OCI-LY7 (cell line): ENCODE measurements at regions of chr19 and their contacts with region 1.

Region 1: GRCh38 chr19:47225746-47226425 is 5.1 kb downstream of the BBC3 start:
- DNase-seq: peak; percentile 92
- H3K4me3 ChIP-seq: peak overlapping the region; percentile 90
- H3K27ac ChIP-seq: peak overlapping the region; percentile 97
- H3K4me1 ChIP-seq: peaks cover 48% of the 10 kb centered on the region
- CTCF ChIP-seq: peak; percentile 43; the same call in 1 of the 2 replicates

Region 2: DNA sequence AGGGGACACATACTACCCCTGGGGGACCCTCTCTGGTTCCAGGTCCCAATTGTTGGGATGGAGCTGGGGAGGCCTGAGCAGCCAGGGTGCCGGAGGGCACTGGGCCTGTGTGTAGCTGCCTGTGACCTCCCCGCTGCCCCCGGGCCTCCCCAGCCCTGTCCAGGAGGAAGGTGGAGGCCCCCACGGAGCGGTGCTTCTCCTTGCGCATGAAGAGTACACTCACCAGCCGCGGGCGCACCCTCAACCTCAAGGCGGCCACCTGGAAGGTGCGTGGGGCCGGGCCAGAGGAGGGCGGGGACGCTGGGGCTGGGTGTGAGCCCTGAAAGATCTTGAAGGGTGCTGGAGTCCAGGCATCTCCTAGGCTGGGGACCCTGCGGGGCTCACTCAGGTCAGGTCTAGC is 917.4 kb before region 1 on chr19:
- CTCF ChIA-PET with region 1: no interaction called
- POLR2A ChIA-PET with region 1: no interaction called
- intact Hi-C with region 1: no loop called
- DNase-seq: no peak
- H3K4me3 ChIP-seq: no peak overlapping the region
- H3K27ac ChIP-seq: no peak overlapping the region
- H3K4me1 ChIP-seq: no peaks in the 10 kb centered on the region
- CTCF ChIP-seq: no peak

Region 3: DNA sequence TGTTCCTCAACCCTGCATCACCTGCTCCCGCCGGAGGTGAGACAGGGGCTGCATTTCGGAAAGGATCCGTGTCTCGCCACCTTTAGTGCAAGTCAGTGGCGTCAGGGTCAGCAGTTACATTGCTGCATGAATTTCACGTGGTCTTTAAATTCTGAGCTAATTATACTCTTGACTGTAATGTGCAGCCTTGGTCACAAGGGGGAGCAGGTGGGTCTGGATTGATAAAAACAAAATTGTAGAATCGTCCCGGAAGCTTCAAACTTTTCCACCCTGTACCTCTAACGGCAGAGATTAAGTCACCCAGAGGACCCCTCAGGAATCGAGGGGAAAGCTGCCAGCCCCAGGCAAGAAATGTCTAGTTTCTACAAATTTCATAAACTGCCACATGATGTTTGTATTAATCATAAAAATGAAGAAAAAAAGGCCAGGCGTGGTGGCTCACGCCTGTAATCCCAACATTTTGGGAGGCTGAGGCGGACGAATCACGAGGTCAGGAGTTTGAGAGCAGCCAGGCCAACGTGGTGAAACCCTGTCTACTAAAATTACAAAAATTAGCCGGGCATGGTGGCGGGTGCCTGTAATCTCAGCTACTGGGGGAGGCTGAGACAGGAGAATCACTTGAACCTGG is 15.1 kb before region 1 on chr19:
- CTCF ChIA-PET with region 1: interaction called, 7 read pairs
- POLR2A ChIA-PET with region 1: interaction called, 13 read pairs
- intact Hi-C with region 1: loop called (anchors 1 kb)
- DNase-seq: peak; percentile 88
- H3K4me3 ChIP-seq: peak overlapping the region; percentile 8
- H3K27ac ChIP-seq: peak overlapping the region; percentile 74
- H3K4me1 ChIP-seq: peaks cover 42% of the 10 kb centered on the region
- CTCF ChIP-seq: peak; percentile 91

Region 4: GRCh38 chr19:47256688-47257443 is 31.0 kb after region 1 on chr19:
- CTCF ChIA-PET with region 1: no interaction called
- POLR2A ChIA-PET with region 1: no interaction called
- intact Hi-C with region 1: loop called (anchors 1 kb)
- DNase-seq: peak; percentile 100
- H3K4me3 ChIP-seq: peak overlapping the region; percentile 72
- H3K27ac ChIP-seq: peak overlapping the region; percentile 59
- H3K4me1 ChIP-seq: peaks cover 14% of the 10 kb centered on the region
- CTCF ChIP-seq: no peak